WTC11 (cell line): ENCODE measurements at regions of chr1 and their contacts with region 1.

Region 1: GRCh38 chr1:159214149-159214760 is 9.6 kb downstream of the ACKR1 start:
- DNase-seq: peak; percentile 67
- ATAC-seq: peak; percentile 66
- H3K4me3 Mint-ChIP-seq: no peak overlapping the region
- H3K27ac Mint-ChIP-seq: no peak overlapping the region
- H3K4me1 Mint-ChIP-seq: peaks cover 31% of the 10 kb centered on the region
- H3K27me3 Mint-ChIP-seq: no peaks in the 10 kb centered on the region; the same call in 1 of the 2 replicates
- CTCF ChIP-seq: peak; percentile 87

Region 2: DNA sequence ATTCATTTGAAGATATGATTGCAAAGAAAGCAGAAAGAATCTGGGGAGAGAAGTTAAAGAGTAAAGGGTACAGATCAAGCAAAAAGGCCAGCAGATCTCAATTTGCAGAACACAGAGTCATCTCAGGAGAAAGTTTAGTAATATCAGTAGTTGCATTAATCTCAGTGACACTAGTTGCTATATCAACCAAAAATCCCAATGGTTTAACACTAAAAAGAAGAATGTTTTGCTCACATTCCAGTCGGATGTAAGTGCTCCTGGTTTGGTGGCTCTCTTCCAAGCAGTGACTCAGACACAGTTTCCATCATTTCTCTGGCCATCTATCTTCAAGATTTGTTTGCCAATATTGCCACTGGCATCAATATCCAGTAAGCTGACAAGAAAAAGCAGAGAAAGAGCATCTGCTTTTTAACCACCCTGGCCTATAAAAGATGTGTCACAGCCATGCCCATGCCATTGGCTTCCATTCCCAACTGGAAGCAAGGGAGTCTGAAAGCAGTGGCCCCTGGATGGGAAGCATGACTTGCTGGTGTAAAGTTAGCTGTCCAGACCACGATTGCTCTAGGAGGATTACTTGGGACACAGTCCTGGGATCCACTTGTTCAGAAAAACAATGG is 92.1 kb before region 1 on chr1:
- CTCF ChIA-PET with region 1: interaction called, 10 read pairs
- POLR2A ChIA-PET with region 1: no interaction called
- DNase-seq: no peak
- ATAC-seq: no peak
- H3K4me3 Mint-ChIP-seq: no peak overlapping the region
- H3K27ac Mint-ChIP-seq: no peak overlapping the region
- H3K4me1 Mint-ChIP-seq: peaks cover 19% of the 10 kb centered on the region
- H3K27me3 Mint-ChIP-seq: no peaks in the 10 kb centered on the region
- CTCF ChIP-seq: no peak

Region 3: GRCh38 chr1:159141584-159142390 is 72.5 kb before region 1 on chr1:
- CTCF ChIA-PET with region 1: interaction called, 181 read pairs
- POLR2A ChIA-PET with region 1: no interaction called
- DNase-seq: peak; percentile 34
- ATAC-seq: peak; percentile 90
- H3K4me3 Mint-ChIP-seq: no peak overlapping the region
- H3K27ac Mint-ChIP-seq: no peak overlapping the region
- H3K4me1 Mint-ChIP-seq: peaks cover 5% of the 10 kb centered on the region
- H3K27me3 Mint-ChIP-seq: no peaks in the 10 kb centered on the region; the same call in 1 of the 2 replicates
- CTCF ChIP-seq: no peak

Region 4: GRCh38 chr1:159171688-159172501 is 42.4 kb before region 1 on chr1:
- CTCF ChIA-PET with region 1: interaction called, 17 read pairs
- POLR2A ChIA-PET with region 1: no interaction called
- DNase-seq: peak; percentile 68
- ATAC-seq: peak; percentile 30
- H3K4me3 Mint-ChIP-seq: peak overlapping the region; percentile 89
- H3K27ac Mint-ChIP-seq: no peak overlapping the region
- H3K4me1 Mint-ChIP-seq: peaks cover 17% of the 10 kb centered on the region
- H3K27me3 Mint-ChIP-seq: peaks cover 23% of the 10 kb centered on the region
- CTCF ChIP-seq: no peak

Region 5: GRCh38 chr1:159188375-159188788 is 25.9 kb before region 1 on chr1:
- CTCF ChIA-PET with region 1: interaction called, 200 read pairs
- POLR2A ChIA-PET with region 1: interaction called, 4 read pairs
- DNase-seq: peak; percentile 89
- ATAC-seq: peak; percentile 97
- H3K4me3 Mint-ChIP-seq: peak overlapping the region; percentile 83
- H3K27ac Mint-ChIP-seq: peak overlapping the region; percentile 85
- H3K4me1 Mint-ChIP-seq: peaks cover 43% of the 10 kb centered on the region
- H3K27me3 Mint-ChIP-seq: peaks cover 3% of the 10 kb centered on the region
- CTCF ChIP-seq: no peak

Region 6: DNA sequence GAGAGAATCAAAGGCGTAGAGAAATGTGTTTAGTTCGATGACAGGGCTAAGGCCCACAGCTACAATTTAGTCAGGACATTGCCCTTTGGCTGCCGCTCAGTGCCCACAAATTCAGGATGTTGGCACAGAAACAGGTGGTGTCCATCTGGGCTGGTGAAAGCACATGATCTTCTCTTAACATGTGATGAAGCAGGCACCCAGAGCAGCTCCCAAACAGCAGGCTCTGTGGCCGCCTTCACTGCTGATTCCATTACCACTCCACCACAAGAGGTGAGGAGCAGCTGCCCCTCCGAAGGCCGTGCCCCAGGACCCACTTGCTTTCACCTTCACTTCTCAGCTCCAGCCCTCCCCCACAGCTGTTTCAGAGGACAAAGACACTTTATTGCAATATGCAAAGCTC is 15.2 kb after region 1 on chr1:
- CTCF ChIA-PET with region 1: interaction called, 32 read pairs
- POLR2A ChIA-PET with region 1: no interaction called
- DNase-seq: no peak
- ATAC-seq: 0 out of 2 replicates have a peak, but pooled peaks have one; percentile 24
- H3K4me3 Mint-ChIP-seq: no peak overlapping the region
- H3K27ac Mint-ChIP-seq: no peak overlapping the region
- H3K4me1 Mint-ChIP-seq: no peaks in the 10 kb centered on the region
- H3K27me3 Mint-ChIP-seq: no peaks in the 10 kb centered on the region
- CTCF ChIP-seq: no peak

Region 7: DNA sequence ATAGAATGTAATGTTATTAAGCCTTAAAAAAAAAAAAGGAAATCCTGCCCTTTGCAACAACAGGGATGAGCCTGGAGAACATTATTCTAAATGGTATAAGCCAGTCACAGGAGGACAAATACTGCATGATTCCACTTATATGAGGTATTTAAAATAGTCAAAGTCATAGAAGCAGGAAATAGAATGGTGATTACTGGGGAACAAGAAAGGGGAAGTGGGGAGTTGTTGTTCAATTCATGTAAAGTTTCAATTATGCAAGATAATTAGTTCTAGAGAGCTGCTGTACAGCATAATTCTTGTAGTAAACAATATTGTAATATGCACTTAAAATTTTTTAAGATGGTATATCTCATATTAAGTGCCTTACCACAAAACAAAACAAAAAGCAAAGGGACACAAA is 101.1 kb after region 1 on chr1:
- CTCF ChIA-PET with region 1: no interaction called
- POLR2A ChIA-PET with region 1: no interaction called
- DNase-seq: no peak
- ATAC-seq: no peak
- H3K4me3 Mint-ChIP-seq: no peak overlapping the region
- H3K27ac Mint-ChIP-seq: no peak overlapping the region
- H3K4me1 Mint-ChIP-seq: no peaks in the 10 kb centered on the region
- H3K27me3 Mint-ChIP-seq: no peaks in the 10 kb centered on the region
- CTCF ChIP-seq: no peak